A549 (cell line): ENCODE measurements at regions of chr11 and their contacts with region 1.

Region 1: DNA sequence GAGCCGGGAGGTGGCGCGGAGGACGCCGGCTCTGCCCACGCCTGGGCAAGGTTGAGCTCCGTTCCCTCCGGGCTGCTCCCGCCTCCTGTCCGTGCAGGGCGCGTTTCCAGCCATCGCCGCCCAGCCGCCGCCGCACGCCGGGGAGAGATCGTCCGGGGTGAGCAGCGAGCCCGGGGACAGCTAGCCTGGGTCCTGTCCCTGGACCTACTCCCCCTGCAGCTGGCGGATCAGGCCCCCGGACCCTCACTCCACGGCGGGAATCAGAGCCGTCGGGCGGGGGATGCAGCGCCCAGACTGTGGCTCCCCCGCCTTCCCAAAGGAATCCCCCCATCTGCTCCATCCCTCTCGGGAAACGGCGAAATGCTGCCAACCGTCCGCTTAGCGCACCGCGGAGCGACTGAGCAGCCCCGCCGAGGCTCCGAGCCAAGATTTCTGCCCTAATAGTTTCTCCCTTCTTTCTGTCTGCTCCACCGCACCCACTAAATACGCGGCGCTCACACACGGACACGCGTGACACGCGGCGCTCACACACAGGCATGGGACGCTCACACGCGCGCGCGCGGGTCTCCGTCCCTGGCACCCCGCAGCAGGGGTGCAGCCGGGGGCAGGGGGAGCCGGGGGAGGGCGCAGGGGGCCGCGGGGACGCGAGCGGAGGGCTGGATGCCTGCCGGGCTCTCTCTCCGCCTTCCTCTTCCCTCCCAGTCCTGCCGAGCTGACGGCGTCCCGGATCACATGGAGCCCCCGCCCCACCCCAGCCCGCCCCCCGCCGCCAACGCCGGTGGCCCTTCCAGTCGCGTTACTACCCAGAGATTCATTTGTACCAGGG is at the start of gene KCNJ5:
- DNase-seq: peak; percentile 7 to 24
- ATAC-seq: peak; percentile 65 to 88
- H3K4me3 ChIP-seq: peak within 1 kb of the TSS; percentile 49
- H3K27ac ChIP-seq: peak within 1 kb of the TSS in 1 of 2 experiments; percentile 37; a peak in 3 of 6 replicates
- H3K4me1 ChIP-seq: no peaks in the 10 kb centered on the region
- CTCF ChIP-seq: no peak
- EP300 ChIP-seq: no peak
- POLR2A ChIP-seq: no peak
- RAD21 ChIP-seq: no peak
- polyA plus RNA-seq, gene KCNJ5: 0.01 and 0.04 TPM in 2 replicates

Region 2: DNA sequence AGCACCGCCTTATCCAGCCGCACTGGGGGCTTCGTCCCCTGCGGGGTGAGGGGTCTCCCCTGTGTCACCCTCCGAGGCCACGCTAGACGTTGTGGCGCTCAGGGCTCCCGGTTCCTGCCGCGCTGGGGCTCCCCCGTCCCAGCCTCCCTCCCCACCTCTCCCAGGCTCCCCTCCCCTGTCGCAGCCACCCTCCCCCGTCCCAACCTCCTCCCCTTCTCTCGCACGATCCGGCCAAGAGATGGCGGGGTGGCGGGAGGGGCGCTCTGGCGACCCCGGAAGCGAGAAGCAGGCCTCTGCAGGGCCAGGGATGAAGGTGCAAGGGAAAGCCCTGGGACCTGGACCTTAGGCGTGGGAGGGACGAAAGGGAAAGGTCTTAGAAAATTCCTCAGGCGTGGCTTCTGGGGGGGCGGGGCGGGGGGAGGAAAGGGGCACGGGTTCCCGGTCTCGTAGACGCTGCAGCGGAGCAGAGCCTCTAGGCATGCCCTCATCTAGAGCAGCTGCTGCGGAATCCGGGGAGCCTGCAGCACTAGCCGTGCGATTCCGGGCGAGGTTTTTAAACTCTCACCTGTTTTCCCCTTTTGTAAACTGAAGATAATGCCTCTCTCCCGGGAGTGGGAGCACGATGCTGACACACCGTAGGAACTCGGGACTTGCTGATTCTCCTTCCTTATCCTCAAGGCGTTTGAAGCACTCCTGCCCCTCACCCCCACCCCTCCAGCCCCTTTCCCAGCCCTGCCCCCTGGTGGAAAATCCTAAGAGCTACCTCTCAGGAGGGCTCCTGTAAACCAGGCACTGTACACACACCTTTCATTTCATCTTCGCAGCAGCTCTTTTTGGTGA is 14.8 kb after region 1 on chr11:
- CTCF ChIA-PET with region 1: interaction called, 57 read pairs
- POLR2A ChIA-PET with region 1: interaction called, 3 read pairs
- DNase-seq: peak; percentile 70 to 80
- ATAC-seq: peak; percentile 84 to 91
- H3K4me3 ChIP-seq: peak overlapping the region; percentile 64
- H3K27ac ChIP-seq: peak overlapping the region; percentile 84 to 99
- H3K4me1 ChIP-seq: peaks cover 15% of the 10 kb centered on the region
- CTCF ChIP-seq: peak; percentile 52
- EP300 ChIP-seq: no peak
- POLR2A ChIP-seq: peak; percentile 36; the same call in 1 of the 2 replicates
- RAD21 ChIP-seq: peak in 1 of 2 experiments; percentile 40; a peak in 3 of 5 replicates